AG04450 (cell line): ENCODE measurements at regions of chr7 and their contacts with region 1.

Region 1: DNA sequence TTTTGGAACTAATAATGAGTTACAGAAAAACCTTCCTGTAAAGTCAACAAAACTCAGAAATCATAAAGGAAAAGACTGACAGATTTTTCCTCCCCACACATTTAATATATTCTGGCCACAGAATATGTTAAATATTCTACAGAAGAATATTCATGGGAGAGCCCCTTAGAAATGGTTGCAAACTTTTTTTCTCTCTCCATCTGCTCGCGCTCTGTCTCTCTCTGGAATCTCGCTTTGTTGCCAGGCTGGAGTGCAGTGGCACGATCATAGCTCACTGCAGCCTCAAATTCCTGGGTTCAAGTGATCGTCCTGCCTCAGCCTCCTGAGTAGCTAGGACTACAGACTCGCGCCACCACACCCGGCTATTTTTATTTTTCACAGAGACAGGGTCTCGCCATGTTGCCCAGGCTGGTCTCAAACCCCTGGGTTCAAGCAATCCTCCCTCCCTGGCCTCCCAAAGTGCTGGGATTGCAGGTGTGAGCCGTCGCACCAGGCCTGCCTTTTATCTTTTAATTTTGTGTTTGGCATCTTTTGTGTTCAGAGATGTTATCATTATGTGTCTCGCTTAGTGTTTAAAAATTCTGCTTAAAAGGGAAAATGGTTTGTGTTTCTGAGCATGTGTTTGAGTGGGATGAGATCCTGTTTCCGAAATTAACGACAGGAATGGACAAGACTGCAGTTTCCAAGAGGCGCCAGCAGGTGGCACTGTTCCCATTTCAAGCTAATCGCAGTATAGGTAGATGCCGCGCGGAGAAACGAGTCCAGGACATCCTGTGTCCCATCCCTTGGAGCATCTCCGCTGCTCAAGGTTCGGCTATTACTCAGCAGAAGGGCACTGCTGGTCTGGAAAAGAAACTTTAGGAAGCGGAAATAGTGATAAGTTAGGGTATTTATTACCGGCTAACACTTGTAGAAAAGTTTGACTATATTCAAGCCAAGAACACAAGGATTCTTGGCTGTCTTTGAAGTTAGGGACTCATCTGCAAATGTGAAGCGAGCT is 23.1 kb upstream of the ST7 start:
- DNase-seq: peak; percentile 58
- H3K4me3 ChIP-seq: no peak overlapping the region
- H3K27ac ChIP-seq: no peak overlapping the region
- H3K27me3 ChIP-seq: no peaks in the 10 kb centered on the region
- CTCF ChIP-seq: peak; percentile 91

Region 2: DNA sequence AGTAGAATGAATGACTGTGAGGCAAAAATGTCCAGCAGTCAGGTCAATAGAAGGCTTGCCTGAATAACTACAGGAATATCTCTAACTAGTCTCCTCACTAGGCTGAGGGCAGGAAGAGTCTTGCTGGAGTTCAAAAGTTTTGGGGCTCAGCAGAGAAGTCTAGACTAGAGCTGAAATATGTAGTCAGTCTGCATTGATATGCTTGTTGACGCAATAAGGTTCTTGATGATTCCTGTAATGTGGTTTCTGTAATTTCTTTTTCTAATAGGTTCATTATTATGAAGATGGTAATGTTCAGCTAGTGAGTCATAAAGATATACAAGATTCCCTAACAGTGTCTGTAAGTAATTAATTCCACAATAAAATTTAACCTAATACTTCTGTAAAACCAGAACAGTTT is 18.4 kb before region 1 on chr7:
- CTCF ChIA-PET with region 1: interaction called, 19 read pairs
- POLR2A ChIA-PET with region 1: no interaction called
- DNase-seq: no peak
- H3K4me3 ChIP-seq: no peak overlapping the region
- H3K27ac ChIP-seq: no peak overlapping the region
- H3K27me3 ChIP-seq: no peaks in the 10 kb centered on the region
- CTCF ChIP-seq: no peak

Region 3: GRCh38 chr7:116940689-116941088 is 10.5 kb after region 1 on chr7:
- CTCF ChIA-PET with region 1: interaction called, 10 read pairs
- POLR2A ChIA-PET with region 1: no interaction called
- DNase-seq: no peak
- H3K4me3 ChIP-seq: no peak overlapping the region
- H3K27ac ChIP-seq: no peak overlapping the region
- H3K27me3 ChIP-seq: no peaks in the 10 kb centered on the region
- CTCF ChIP-seq: no peak

Region 4: DNA sequence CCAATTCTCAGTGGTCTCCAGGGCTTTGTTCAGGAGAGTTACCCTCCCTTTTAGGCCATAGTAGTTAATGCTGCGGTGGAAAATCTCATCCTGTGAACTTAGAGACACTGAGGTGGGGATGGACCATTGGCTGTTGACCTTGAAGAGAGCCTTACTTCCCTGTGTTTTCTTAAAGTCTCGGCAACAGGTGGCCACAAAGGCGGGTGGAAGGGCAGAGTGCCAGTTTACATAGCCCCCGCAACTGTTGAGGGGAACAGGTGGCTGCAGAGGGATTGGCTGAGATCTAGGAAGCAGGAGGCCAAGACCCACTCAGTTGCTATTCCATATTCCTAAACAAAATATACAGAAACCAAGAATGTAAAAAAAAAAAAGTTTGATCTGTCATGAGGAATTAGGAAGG is 183.7 kb after region 1 on chr7:
- CTCF ChIA-PET with region 1: interaction called, 10 read pairs
- POLR2A ChIA-PET with region 1: no interaction called
- DNase-seq: no peak
- H3K4me3 ChIP-seq: no peak overlapping the region
- H3K27ac ChIP-seq: no peak overlapping the region
- H3K27me3 ChIP-seq: no peaks in the 10 kb centered on the region
- CTCF ChIP-seq: no peak

Region 5: DNA sequence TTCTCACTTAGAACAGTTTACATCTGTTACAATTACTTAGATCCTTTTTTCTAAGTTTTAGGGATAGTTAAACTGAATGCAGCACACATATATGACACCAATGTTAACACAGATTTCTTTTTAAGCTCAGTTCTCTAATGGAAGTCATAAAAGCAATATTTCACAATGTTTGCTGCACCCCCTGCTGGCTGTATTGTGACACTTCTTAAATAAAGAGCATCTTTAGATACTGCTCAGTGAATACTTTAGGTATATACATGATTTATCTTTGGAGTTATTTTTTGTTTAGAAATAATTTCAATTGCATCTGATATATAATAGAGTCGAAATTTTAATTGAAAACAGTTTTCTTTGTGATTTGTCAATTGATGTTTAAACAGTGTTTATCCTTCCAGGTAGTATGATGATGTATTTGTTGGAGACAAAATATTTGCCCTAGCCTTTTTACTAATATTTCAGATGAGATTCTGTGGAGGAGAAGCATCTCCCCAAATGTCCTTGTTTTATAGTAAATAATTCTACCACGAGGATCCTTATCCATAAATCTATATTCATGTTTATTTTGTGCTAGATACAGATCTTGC is 197.5 kb after region 1 on chr7:
- CTCF ChIA-PET with region 1: interaction called, 76 read pairs
- POLR2A ChIA-PET with region 1: no interaction called
- DNase-seq: peak; percentile 21
- H3K4me3 ChIP-seq: no peak overlapping the region
- H3K27ac ChIP-seq: no peak overlapping the region
- H3K27me3 ChIP-seq: no peaks in the 10 kb centered on the region
- CTCF ChIP-seq: peak; percentile 72